Activated B cell treated with CpG ODN at 0.5 μM for 24 hours (primary cell): ENCODE measurements at regions of chr9 and their contacts with region 1.

Region 1: GRCh38 chr9:94554439-94555391 is at the start of gene PCAT7:
- DNase-seq: no peak
- ATAC-seq: peak; percentile 47
- H3K4me3 Mint-ChIP-seq: no peak within 1 kb of the TSS
- H3K27ac Mint-ChIP-seq: no peak within 1 kb of the TSS
- H3K4me1 Mint-ChIP-seq: no peaks in the 10 kb centered on the region
- H3K27me3 Mint-ChIP-seq: peaks cover 7% of the 10 kb centered on the region
- CTCF ChIP-seq: no peak
- total RNA-seq, gene PCAT7: not detected in 2 replicates

Region 2: GRCh38 chr9:94603259-94604160 is 48.8 kb after region 1 on chr9:
- CTCF ChIA-PET with region 1: no interaction called
- POLR2A ChIA-PET with region 1: no interaction called
- intact Hi-C with region 1: loop called (anchors 1 kb)
- DNase-seq: peak; percentile 33
- ATAC-seq: peak; percentile 64
- H3K4me3 Mint-ChIP-seq: no peak overlapping the region
- H3K27ac Mint-ChIP-seq: no peak overlapping the region
- H3K4me1 Mint-ChIP-seq: peaks cover 4% of the 10 kb centered on the region
- H3K27me3 Mint-ChIP-seq: peaks cover 33% of the 10 kb centered on the region
- CTCF ChIP-seq: no peak

Region 3: DNA sequence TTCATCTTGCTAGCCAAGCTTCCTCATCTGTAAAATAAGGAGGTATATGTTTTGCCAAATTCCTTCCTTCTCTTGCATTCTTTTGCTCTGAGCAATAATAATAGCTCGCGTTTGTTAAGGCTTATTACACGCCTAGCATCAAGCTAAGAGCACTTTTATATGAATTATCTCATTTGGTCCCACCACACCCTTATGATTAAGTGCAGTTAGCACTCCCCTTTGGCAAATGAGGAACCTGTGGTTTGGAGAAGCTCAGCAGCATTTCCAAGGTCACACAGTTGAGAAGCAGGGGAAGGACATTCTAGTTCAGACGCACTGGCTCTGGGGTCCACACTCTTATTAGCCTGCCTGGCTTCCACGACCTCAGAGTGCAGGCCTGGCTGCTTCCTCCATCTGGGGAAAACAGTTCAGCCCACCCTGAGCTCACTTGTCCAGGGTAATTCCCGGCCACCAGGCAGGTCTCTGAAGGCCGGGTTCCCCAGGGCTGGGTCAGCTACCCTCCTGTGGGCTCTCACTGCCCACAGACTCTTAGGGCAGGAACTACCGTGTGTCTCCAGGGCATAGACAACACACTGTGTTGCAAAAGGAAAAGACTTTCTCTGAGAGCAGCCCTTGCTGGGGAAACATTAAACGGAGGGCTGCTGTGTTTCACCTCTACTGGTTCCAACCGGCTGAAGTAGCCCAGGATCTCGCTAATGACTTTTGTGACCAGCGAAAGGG is 94.5 kb after region 1 on chr9:
- CTCF ChIA-PET with region 1: no interaction called
- POLR2A ChIA-PET with region 1: no interaction called
- intact Hi-C with region 1: no loop called
- DNase-seq: no peak
- ATAC-seq: no peak
- H3K4me3 Mint-ChIP-seq: no peak overlapping the region
- H3K27ac Mint-ChIP-seq: no peak overlapping the region
- H3K4me1 Mint-ChIP-seq: no peaks in the 10 kb centered on the region
- H3K27me3 Mint-ChIP-seq: no peaks in the 10 kb centered on the region
- CTCF ChIP-seq: no peak